CD4-positive, alpha-beta T cell (primary cell): ENCODE measurements at regions of chr17 and their contacts with region 1.

Region 1: DNA sequence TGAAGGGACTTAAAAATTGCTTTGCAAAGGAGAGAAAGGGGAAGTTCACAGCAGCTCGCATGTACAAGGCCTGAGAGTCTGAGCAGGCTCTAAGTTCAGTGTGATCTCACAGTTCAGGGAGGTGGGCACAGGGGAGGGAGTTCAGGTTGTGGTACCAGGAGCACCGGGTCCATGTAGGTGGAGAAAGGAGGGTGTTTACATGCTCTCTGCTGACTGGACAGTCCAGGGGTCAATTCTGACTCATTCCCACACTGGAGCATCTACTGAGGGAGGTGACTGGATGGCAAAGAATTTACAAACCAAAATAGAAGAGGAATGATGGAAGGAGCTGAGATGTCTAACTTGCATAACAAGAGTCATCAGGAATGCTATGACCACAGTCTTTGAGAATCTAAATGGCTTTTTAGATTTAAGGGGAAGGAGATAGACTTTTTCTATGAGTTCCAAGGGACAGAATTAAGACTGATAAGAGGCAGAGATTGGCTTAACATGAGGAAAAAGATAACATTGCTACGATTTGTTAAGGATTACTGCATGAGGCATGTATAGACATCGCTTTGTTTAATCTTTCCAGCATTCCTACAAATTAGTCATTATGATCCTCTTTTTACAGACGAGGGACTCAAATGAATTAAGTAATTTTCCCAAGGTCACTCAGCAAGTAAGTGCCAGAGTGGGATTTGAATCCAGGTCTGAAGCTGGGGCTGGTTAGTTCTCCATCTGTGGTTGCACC is 29.9 kb downstream of the MIS12 start:
- DNase-seq: no peak
- ATAC-seq: no peak
- H3K4me3 ChIP-seq: no peak overlapping the region
- H3K4me3 Mint-ChIP-seq: no peak overlapping the region
- H3K27ac ChIP-seq: no peak overlapping the region
- H3K27ac Mint-ChIP-seq: no peak overlapping the region
- H3K4me1 ChIP-seq: peaks cover 25% of the 10 kb centered on the region
- H3K4me1 Mint-ChIP-seq: peaks cover 39% of the 10 kb centered on the region
- H3K27me3 ChIP-seq: no peaks in the 10 kb centered on the region
- H3K27me3 Mint-ChIP-seq: no peaks in the 10 kb centered on the region
- CTCF ChIP-seq: no peak

Region 2: DNA sequence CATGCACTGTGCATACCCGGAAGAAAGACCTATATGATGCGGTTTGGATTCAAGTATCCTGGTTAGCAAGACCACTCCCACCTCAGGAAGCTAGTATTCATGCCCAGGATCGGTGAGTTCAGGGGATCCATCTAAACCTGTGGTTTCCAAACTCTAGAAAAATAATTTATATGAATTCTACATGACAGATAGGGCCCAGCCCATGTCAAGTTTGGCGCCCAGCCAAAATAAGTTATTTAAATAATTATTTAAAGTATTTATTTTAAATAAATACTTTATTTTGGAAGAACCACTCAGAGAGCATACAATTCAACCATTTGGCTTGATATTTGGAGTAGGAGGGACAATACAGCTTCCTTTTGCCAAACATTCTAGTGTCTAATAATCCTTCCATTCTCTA is 360.7 kb before region 1 on chr17:
- CTCF ChIA-PET with region 1: no interaction called
- POLR2A ChIA-PET with region 1: no interaction called
- intact Hi-C with region 1: no loop called
- DNase-seq: no peak
- ATAC-seq: no peak
- H3K4me3 ChIP-seq: no peak overlapping the region
- H3K4me3 Mint-ChIP-seq: no peak overlapping the region
- H3K27ac ChIP-seq: no peak overlapping the region
- H3K27ac Mint-ChIP-seq: no peak overlapping the region
- H3K4me1 ChIP-seq: no peaks in the 10 kb centered on the region
- H3K4me1 Mint-ChIP-seq: no peaks in the 10 kb centered on the region
- H3K27me3 ChIP-seq: peaks cover 0 to 2% of the 10 kb centered on the region in 2 experiments
- H3K27me3 Mint-ChIP-seq: peaks cover 43% of the 10 kb centered on the region
- CTCF ChIP-seq: no peak

Region 3: GRCh38 chr17:5500589-5501391 is 15.4 kb before region 1 on chr17:
- CTCF ChIA-PET with region 1: interaction called, 3 read pairs
- POLR2A ChIA-PET with region 1: interaction called, 10 read pairs
- intact Hi-C with region 1: no loop called
- DNase-seq: peak; percentile 60 to 91 (median 74)
- ATAC-seq: peak; percentile 95
- H3K4me3 ChIP-seq: peak overlapping the region; percentile 64
- H3K4me3 Mint-ChIP-seq: peak overlapping the region; percentile 93
- H3K27ac ChIP-seq: peak overlapping the region in 1 of 2 donors; percentile 14
- H3K27ac Mint-ChIP-seq: peak overlapping the region; percentile 83
- H3K4me1 ChIP-seq: peaks cover 17% of the 10 kb centered on the region
- H3K4me1 Mint-ChIP-seq: peaks cover 21% of the 10 kb centered on the region
- H3K27me3 ChIP-seq: no peaks in the 10 kb centered on the region
- H3K27me3 Mint-ChIP-seq: no peaks in the 10 kb centered on the region
- CTCF ChIP-seq: no peak

Region 4: DNA sequence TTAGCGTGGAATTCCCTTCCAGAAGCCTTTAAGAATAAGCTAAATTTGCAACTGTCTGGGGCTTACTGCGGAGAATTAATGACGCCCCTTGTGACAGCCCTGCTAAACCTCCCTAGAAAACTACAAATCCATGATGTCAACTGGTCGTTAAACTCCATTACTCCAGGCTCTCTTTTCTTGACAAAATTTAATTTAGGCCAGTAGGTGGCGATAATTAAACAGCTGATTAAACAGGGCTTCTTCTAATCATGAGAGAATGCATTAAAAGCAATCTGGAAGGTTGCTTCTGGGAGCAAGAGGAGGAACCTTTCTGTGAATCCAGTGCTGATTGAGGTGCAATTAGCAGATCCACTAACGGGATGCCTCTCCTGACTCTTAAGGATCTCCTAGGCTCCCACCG is 76.2 kb after region 1 on chr17:
- CTCF ChIA-PET with region 1: no interaction called
- POLR2A ChIA-PET with region 1: no interaction called
- intact Hi-C with region 1: no loop called
- DNase-seq: peak in 3 of 14 experiments; percentile 56 to 68 (median 61)
- ATAC-seq: peak; percentile 65
- H3K4me3 ChIP-seq: no peak overlapping the region
- H3K4me3 Mint-ChIP-seq: no peak overlapping the region
- H3K27ac ChIP-seq: no peak overlapping the region
- H3K27ac Mint-ChIP-seq: no peak overlapping the region
- H3K4me1 ChIP-seq: peaks cover 1% of the 10 kb centered on the region
- H3K4me1 Mint-ChIP-seq: peaks cover 3% of the 10 kb centered on the region
- H3K27me3 ChIP-seq: peaks cover 5% of the 10 kb centered on the region in 2 experiments
- H3K27me3 Mint-ChIP-seq: peaks cover 39% of the 10 kb centered on the region
- CTCF ChIP-seq: peak; percentile 81